ENCODE measurements at regions of chr15 and their contacts with region 1.

Region 1: GRCh38 chr15:49741712-49742111 is 120.9 kb downstream of the DTWD1 start:
- DNase-seq: no peak
- H3K4me3 ChIP-seq: no peak overlapping the region
- H3K27ac ChIP-seq: no peak overlapping the region
- H3K4me1 ChIP-seq: no peaks in the 10 kb centered on the region
- H3K27me3 ChIP-seq: no peaks in the 10 kb centered on the region
- CTCF ChIP-seq: no peak
- EP300 ChIP-seq: no peak
- POLR2A ChIP-seq: no peak

Region 2: DNA sequence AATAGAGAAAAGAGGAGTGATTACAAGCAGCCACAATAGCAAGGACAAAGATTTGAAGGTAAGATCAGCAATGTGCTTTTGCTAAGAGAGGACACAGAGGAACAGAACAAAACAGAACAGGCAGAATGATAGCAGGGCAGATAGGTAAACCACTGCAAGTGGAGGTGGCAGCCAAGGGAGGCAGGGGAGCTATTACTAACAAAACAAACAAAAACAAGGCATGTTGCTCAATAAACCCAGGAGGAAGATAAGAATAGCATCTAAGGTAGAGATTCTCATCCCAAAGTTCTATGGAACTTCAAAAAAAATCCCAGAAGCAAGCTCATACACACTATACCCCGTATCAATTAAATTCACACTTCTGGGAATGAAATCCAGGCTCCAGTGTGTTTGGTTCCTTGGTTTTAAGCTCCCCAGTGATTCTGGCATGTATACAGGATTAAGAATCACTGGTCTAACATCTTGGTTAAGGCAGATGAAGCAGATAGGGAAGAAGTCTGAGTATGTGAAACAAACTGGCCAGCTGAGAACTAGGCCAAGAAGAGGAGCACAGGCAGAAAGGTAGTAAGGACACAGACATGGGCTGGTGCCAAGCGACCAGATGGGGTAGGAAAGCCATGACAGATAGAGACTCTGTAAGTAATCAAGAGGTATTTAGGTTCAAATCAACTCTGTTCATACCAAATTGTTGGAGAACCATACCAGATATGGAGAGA is 68.3 kb after region 1 on chr15:
- intact Hi-C with region 1: loop called (anchors 10 kb)
- DNase-seq: no peak
- H3K4me3 ChIP-seq: no peak overlapping the region
- H3K27ac ChIP-seq: peak overlapping the region in 1 of 4 donors; percentile 45
- H3K4me1 ChIP-seq: peaks cover 0 to 12% (median 1%) of the 10 kb centered on the region in 4 donors
- H3K27me3 ChIP-seq: no peaks in the 10 kb centered on the region
- CTCF ChIP-seq: no peak
- EP300 ChIP-seq: no peak
- POLR2A ChIP-seq: no peak